ENCODE measurements at regions of chr16 and their contacts with region 1.

Region 1: GRCh38 chr16:71412270-71413160 is 29.3 kb downstream of the TLE7 start:
- DNase-seq: peak; percentile 80
- H3K4me3 Mint-ChIP-seq: no peak overlapping the region
- H3K27ac Mint-ChIP-seq: no peak overlapping the region
- H3K4me1 Mint-ChIP-seq: no peaks in the 10 kb centered on the region
- H3K27me3 Mint-ChIP-seq: peaks cover 53% of the 10 kb centered on the region
- CTCF ChIP-seq: peak; percentile 63

Region 2: DNA sequence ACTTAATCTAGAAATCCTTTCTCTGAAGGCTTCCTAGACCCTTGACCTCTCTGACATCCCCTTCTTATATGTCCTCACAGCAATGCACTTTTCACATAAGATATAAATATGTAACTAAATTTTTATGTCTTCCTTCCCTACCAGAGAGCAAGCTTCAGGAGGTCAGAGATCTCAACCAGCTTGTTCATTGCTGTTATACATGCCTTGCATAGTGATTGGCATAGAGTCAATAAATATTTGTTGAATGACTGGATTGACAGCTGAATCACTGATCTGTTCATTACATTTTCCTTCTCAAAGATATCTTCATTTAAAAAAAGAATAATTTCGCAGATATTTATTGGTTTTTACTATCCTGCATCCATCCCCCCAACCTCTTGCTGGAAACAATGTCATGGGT is 211.5 kb before region 1 on chr16:
- CTCF ChIA-PET with region 1: no interaction called
- POLR2A ChIA-PET with region 1: no interaction called
- intact Hi-C with region 1: no loop called
- DNase-seq: no peak
- H3K4me3 Mint-ChIP-seq: no peak overlapping the region
- H3K27ac Mint-ChIP-seq: no peak overlapping the region
- H3K4me1 Mint-ChIP-seq: no peaks in the 10 kb centered on the region
- H3K27me3 Mint-ChIP-seq: peaks cover 11% of the 10 kb centered on the region
- CTCF ChIP-seq: no peak

Region 3: DNA sequence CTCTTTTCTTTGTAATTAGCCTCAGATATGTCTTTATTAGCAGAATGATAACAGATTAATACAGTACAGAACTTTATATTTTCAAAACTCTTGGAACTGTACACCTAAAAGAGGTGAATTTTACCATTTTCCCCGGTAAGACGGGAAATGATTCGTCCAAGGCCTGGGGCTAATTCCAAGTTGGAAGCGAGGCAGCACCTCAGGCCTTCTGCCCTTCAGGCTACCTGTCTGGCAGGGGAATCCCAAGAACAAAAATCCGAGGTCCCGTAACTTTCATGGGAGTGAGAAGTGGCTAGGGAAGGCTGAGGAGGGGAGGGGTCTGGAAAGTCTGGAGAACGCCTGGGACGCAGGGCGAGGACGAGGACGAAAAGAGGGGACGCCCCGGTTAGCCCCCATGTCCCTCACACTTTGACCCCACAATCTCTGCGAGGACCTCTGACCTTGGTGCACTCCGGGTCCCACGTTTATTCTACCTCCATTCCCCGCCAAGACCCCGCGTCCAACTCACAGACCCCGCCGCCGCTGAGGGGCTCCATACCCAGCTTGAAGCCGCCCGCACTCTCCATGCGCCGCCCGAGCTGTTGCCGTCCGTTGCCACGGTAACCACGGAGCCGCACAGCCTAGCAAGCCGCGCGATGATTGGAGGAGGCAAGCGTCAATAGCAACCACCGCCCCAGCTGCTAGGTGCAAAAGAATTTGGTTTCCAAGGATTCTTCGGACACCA is 182.2 kb before region 1 on chr16 and contains the start of gene HYDIN:
- CTCF ChIA-PET with region 1: no interaction called
- POLR2A ChIA-PET with region 1: no interaction called
- intact Hi-C with region 1: no loop called
- DNase-seq: no peak
- H3K4me3 Mint-ChIP-seq: peak within 1 kb of the TSS; percentile 62
- H3K27ac Mint-ChIP-seq: no peak within 1 kb of the TSS
- H3K4me1 Mint-ChIP-seq: no peaks in the 10 kb centered on the region
- H3K27me3 Mint-ChIP-seq: peaks cover 16% of the 10 kb centered on the region
- CTCF ChIP-seq: no peak
- total RNA-seq, gene HYDIN: 0.35 TPM in 1 of 2 replicates, not detected in the other

Region 4: DNA sequence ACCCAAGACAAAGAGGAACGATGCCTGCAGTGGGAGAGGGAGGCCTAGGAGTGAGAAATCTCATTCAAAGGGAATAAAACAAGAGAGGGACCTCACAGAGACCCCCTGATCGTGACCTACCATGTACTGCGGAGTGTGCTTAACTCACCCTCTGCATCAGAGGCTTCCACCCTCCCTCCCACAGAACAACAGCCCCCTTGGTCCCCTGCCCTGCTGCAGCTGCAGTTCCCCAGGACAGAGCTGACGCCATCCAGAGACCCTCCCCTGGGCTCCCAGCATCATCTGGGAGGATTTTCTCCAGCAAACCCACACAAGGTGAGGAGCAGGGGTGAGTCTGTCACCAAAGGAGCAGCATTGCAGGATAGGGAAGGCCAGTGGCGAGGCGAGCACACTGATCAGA is 10.5 kb before region 1 on chr16:
- CTCF ChIA-PET with region 1: interaction called, 10 read pairs
- POLR2A ChIA-PET with region 1: no interaction called
- intact Hi-C with region 1: no loop called
- DNase-seq: no peak
- H3K4me3 Mint-ChIP-seq: no peak overlapping the region
- H3K27ac Mint-ChIP-seq: no peak overlapping the region
- H3K4me1 Mint-ChIP-seq: no peaks in the 10 kb centered on the region
- H3K27me3 Mint-ChIP-seq: peaks cover 30% of the 10 kb centered on the region
- CTCF ChIP-seq: no peak

Region 5: GRCh38 chr16:71461686-71462648 is 49.5 kb after region 1 on chr16 and contains the start of gene ZNF23:
- CTCF ChIA-PET with region 1: interaction called, 14 read pairs
- POLR2A ChIA-PET with region 1: interaction called, 4 read pairs
- intact Hi-C with region 1: no loop called
- DNase-seq: peak; percentile 68
- H3K4me3 Mint-ChIP-seq: peak within 1 kb of the TSS; percentile 89
- H3K27ac Mint-ChIP-seq: peak within 1 kb of the TSS; percentile 82
- H3K4me1 Mint-ChIP-seq: peaks cover 5% of the 10 kb centered on the region
- H3K27me3 Mint-ChIP-seq: no peaks in the 10 kb centered on the region
- CTCF ChIP-seq: peak; percentile 4
- total RNA-seq, gene ZNF23: 12.6 and 13.7 TPM in 2 replicates

Region 6: DNA sequence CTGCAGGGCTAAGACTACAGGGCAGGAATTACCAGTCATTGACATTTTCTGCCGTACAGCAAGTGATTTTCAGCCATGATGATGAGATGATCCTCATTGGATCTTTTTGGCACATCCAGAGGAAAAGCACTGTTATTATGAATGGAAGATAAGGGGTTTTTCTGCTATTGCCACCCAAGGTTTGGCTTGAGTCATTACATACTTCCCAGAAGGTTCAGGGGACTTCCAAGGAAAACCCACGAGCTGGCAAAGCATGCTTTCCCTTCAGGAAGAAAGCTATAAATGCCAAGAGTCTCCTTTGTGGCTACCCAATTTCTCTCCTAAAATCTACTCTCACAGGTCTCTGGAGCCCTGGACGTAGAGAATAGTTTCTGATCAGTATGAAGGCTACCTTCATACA is 119.9 kb after region 1 on chr16:
- CTCF ChIA-PET with region 1: interaction called, 83 read pairs
- POLR2A ChIA-PET with region 1: no interaction called
- intact Hi-C with region 1: loop called (anchors 1 kb)
- DNase-seq: no peak
- H3K4me3 Mint-ChIP-seq: no peak overlapping the region
- H3K27ac Mint-ChIP-seq: no peak overlapping the region
- H3K4me1 Mint-ChIP-seq: no peaks in the 10 kb centered on the region
- H3K27me3 Mint-ChIP-seq: no peaks in the 10 kb centered on the region
- CTCF ChIP-seq: no peak

Region 7: GRCh38 chr16:71537643-71538042 is 125.1 kb after region 1 on chr16:
- CTCF ChIA-PET with region 1: interaction called, 83 read pairs
- POLR2A ChIA-PET with region 1: no interaction called
- intact Hi-C with region 1: loop called (anchors 1 kb)
- DNase-seq: peak; percentile 69
- H3K4me3 Mint-ChIP-seq: no peak overlapping the region
- H3K27ac Mint-ChIP-seq: no peak overlapping the region
- H3K4me1 Mint-ChIP-seq: no peaks in the 10 kb centered on the region
- H3K27me3 Mint-ChIP-seq: peaks cover 11% of the 10 kb centered on the region
- CTCF ChIP-seq: peak; percentile 76

Measured in MCF 10A (cell line).